ENCODE measurements at regions of chr7 and their contacts with region 1.

Region 1: GRCh38 chr7:33904681-33905388 is 504 bp upstream of the BMPER start:
- DNase-seq: peak; percentile 17
- ATAC-seq: peak; percentile 42
- H3K4me3 Mint-ChIP-seq: peak overlapping the region; percentile 75
- H3K27ac Mint-ChIP-seq: no peak overlapping the region
- H3K4me1 Mint-ChIP-seq: peaks cover 15% of the 10 kb centered on the region
- H3K27me3 Mint-ChIP-seq: peaks cover 56% of the 10 kb centered on the region
- CTCF ChIP-seq: no peak

Region 2: GRCh38 chr7:33232632-33233145 is 672.1 kb before region 1 on chr7:
- CTCF ChIA-PET with region 1: no interaction called
- POLR2A ChIA-PET with region 1: interaction called, 10 read pairs
- intact Hi-C with region 1: no loop called
- DNase-seq: no peak
- ATAC-seq: no peak
- H3K4me3 Mint-ChIP-seq: no peak overlapping the region
- H3K27ac Mint-ChIP-seq: no peak overlapping the region
- H3K4me1 Mint-ChIP-seq: peaks cover 11% of the 10 kb centered on the region
- H3K27me3 Mint-ChIP-seq: no peaks in the 10 kb centered on the region
- CTCF ChIP-seq: no peak

Region 3: GRCh38 chr7:33932832-33933468 is 28.1 kb after region 1 on chr7:
- CTCF ChIA-PET with region 1: interaction called, 10 read pairs
- POLR2A ChIA-PET with region 1: no interaction called
- intact Hi-C with region 1: no loop called
- DNase-seq: peak; percentile 37
- ATAC-seq: peak; percentile 42
- H3K4me3 Mint-ChIP-seq: no peak overlapping the region
- H3K27ac Mint-ChIP-seq: no peak overlapping the region
- H3K4me1 Mint-ChIP-seq: no peaks in the 10 kb centered on the region
- H3K27me3 Mint-ChIP-seq: peaks cover 8% of the 10 kb centered on the region
- CTCF ChIP-seq: peak; percentile 36

Region 4: GRCh38 chr7:34058801-34059489 is 154.1 kb after region 1 on chr7:
- CTCF ChIA-PET with region 1: no interaction called
- POLR2A ChIA-PET with region 1: no interaction called
- intact Hi-C with region 1: no loop called
- DNase-seq: no peak
- ATAC-seq: no peak
- H3K4me3 Mint-ChIP-seq: no peak overlapping the region
- H3K27ac Mint-ChIP-seq: no peak overlapping the region
- H3K4me1 Mint-ChIP-seq: no peaks in the 10 kb centered on the region
- H3K27me3 Mint-ChIP-seq: peaks cover 3% of the 10 kb centered on the region
- CTCF ChIP-seq: no peak

Measured in activated B cell treated with CpG ODN at 0.5 μM for 24 hours (primary cell).